ENCODE measurements at regions of chr2 and their contacts with region 1.

Region 1: DNA sequence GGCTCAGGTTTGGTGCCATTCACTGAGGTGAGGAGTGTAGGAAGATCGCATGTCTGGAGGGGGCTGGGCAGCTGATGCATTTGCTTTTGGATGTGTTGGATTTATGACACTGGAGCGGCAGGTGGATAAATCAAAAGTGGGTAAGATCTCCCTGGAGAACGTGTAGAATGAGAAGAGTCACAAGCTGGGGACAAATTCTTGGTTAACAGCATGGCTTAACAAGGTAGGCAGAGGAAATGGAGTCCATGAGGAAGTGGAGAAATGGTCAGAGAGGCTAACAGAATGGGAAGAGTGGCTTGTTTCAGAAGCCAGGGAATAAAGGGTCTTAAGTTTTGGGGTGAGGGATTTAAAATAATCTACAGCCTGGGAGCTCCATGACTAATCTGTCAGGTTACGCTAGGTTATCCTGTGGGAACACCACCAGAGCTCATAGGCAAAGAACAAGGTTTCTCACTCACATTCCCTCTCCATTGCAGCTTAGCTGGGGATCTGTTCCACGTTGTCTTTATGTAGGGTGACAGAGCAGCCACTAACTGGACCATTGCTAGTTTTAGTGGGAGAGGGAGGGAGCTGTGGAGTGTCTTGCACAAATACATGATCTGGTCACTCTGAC is 12.8 kb downstream of the TSN start:
- DNase-seq: no peak
- ATAC-seq: peak; percentile 34
- H3K4me3 ChIP-seq: no peak overlapping the region
- H3K27ac ChIP-seq: no peak overlapping the region
- H3K4me1 ChIP-seq: no peaks in the 10 kb centered on the region
- H3K27me3 ChIP-seq: no peaks in the 10 kb centered on the region
- CTCF ChIP-seq: no peak
- EP300 ChIP-seq: no peak
- POLR2A ChIP-seq: peak; percentile 64; the same call in 1 of the 2 replicates
- RAD21 ChIP-seq: no peak

Region 2: DNA sequence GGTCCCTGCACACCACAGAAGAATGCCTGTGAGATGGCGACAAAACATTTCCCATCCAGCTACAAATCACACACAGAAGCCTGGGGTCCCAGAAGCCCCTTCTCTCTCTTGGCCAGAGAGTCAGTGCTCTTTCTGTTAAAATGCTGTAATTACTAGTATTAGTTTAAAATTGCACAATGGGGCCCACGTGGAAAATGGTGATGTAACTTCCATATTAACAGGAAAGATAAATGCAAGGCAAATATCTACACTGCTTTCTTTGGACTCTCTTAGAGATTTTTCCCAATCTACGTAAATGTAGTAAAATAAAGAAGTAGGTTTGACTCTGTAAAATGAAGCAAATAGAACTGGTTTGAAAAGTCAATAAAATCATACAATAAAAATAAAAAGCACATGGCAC is 369.4 kb before region 1 on chr2:
- CTCF ChIA-PET with region 1: no interaction called
- POLR2A ChIA-PET with region 1: no interaction called
- in situ Hi-C with region 1: no loop called
- intact Hi-C with region 1: no loop called
- DNase-seq: no peak
- ATAC-seq: no peak
- H3K4me3 ChIP-seq: no peak overlapping the region
- H3K27ac ChIP-seq: no peak overlapping the region
- H3K4me1 ChIP-seq: no peaks in the 10 kb centered on the region
- H3K27me3 ChIP-seq: no peaks in the 10 kb centered on the region
- CTCF ChIP-seq: no peak
- EP300 ChIP-seq: no peak
- POLR2A ChIP-seq: no peak
- RAD21 ChIP-seq: no peak

Region 3: GRCh38 chr2:121539750-121540469 is 228.3 kb before region 1 on chr2:
- CTCF ChIA-PET with region 1: no interaction called
- POLR2A ChIA-PET with region 1: no interaction called
- in situ Hi-C with region 1: no loop called
- intact Hi-C with region 1: no loop called
- DNase-seq: no peak
- ATAC-seq: no peak
- H3K4me3 ChIP-seq: no peak overlapping the region
- H3K27ac ChIP-seq: no peak overlapping the region
- H3K4me1 ChIP-seq: peaks cover 14 to 17% of the 10 kb centered on the region in 2 experiments; a peak in 4 of 5 replicates
- H3K27me3 ChIP-seq: no peaks in the 10 kb centered on the region
- CTCF ChIP-seq: no peak
- EP300 ChIP-seq: no peak
- POLR2A ChIP-seq: no peak
- RAD21 ChIP-seq: no peak

Region 4: DNA sequence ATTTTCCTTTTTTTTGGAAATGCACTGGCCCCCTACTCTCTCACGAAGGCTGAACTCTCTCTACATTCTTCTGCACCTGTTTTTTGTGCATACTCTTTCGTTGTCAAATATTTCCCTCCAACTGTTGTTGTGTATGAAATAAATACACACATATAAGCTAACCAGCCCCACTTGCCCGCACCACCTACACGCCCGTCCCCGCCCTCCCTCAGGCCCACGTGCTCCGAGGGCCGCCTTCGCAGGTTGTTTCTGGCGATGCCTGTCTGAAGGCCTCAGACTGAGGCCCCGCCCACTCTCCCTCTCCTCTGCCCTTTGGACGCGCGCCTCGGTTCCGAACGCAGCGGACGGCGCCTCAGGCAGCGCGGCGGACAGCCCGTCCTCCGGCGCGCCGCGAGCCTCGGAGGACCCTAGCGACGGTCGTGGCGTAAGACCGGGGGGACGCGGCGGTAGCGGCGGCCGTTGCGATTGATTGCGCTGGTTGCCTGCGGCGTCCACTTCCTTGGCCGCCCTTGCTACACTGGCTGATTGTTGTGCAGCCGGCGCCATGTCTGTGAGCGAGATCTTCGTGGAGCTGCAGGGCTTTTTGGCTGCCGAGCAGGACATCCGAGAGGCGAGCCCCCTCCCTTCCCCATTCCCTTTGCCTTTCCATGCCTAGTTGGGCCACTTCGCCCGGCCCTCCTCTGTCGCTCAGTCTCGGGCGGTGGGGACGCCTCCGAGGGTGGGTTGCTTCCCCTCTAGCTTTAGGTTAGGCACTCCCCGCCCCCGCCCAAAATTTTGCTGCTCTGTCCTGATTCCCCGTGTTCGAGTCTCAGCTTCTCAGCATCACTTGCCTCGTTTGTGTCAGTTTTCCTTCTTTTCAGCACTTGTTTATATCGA is 12.8 kb before region 1 on chr2 and contains the start of gene TSN:
- CTCF ChIA-PET with region 1: no interaction called
- POLR2A ChIA-PET with region 1: interaction called, 13 read pairs
- in situ Hi-C with region 1: no loop called
- intact Hi-C with region 1: no loop called
- DNase-seq: peak; percentile 93 to 100 (median 94)
- ATAC-seq: peak; percentile 99
- H3K4me3 ChIP-seq: peak within 1 kb of the TSS; percentile 96
- H3K27ac ChIP-seq: peak within 1 kb of the TSS; percentile 87
- H3K4me1 ChIP-seq: peaks cover 0 to 3% of the 10 kb centered on the region in 2 experiments; a peak in 3 of 5 replicates
- H3K27me3 ChIP-seq: no peaks in the 10 kb centered on the region
- CTCF ChIP-seq: no peak
- EP300 ChIP-seq: peak; percentile 40; the same call in 1 of the 2 replicates
- POLR2A ChIP-seq: peak; percentile 85
- RAD21 ChIP-seq: no peak
- polyA plus RNA-seq, gene TSN: 142 to 152 TPM